ENCODE measurements at regions of chr2 and their contacts with region 1.

Region 1: DNA sequence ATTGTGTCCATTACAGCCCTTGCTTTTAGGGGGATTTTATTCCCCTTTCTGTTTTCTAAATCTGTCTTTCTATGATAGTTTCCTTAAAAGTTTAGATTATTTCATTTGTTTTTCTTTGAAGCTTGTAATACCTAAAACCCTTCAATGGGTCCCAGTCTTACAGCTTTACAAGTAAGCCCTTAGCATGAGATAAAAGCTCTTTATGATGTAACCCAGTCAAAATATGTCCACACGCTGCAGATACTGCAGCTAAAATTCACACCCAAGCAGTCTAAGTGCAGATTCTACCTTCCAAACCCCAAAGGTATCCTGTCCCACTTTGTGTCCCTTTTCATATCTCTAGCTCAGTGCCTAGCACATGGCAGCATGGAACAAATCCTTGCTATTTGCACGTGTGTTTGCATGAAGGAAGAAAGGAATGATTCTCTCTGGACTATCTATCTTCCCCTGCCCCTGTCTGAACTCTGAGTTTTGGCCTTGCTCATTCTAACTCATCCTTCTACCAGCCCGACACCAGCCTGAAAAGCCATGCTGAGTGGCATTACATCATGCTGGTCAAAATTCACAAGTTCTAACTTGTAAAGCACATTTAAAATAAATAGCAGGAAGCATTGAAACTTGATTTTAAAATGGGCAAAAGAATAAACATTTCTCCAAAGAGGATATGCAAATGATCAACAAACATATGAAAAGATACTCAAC is 623.2 kb downstream of the IRS1 start:
- DNase-seq: no peak
- ATAC-seq: no peak
- H3K4me3 ChIP-seq: no peak overlapping the region
- H3K4me3 Mint-ChIP-seq: no peak overlapping the region
- H3K27ac ChIP-seq: no peak overlapping the region
- H3K27ac Mint-ChIP-seq: no peak overlapping the region
- H3K4me1 ChIP-seq: no peaks in the 10 kb centered on the region
- H3K4me1 Mint-ChIP-seq: no peaks in the 10 kb centered on the region
- H3K27me3 ChIP-seq: no peaks in the 10 kb centered on the region
- H3K27me3 Mint-ChIP-seq: peaks cover 0 to 21% of the 10 kb centered on the region in 2 donors

Region 2: GRCh38 chr2:226030788-226031646 is 145.4 kb before region 1 on chr2:
- CTCF ChIA-PET with region 1: no interaction called
- POLR2A ChIA-PET with region 1: no interaction called
- DNase-seq: peak in 1 of 35 experiments; percentile 8
- ATAC-seq: peak in 3 of 4 experiments; percentile 37 to 51 (median 40)
- H3K4me3 ChIP-seq: peak overlapping the region in 1 of 2 donors; percentile 49
- H3K4me3 Mint-ChIP-seq: peak overlapping the region; percentile 10 to 65 (median 58)
- H3K27ac ChIP-seq: no peak overlapping the region
- H3K27ac Mint-ChIP-seq: no peak overlapping the region
- H3K4me1 ChIP-seq: peaks cover 0 to 4% of the 10 kb centered on the region in 2 experiments
- H3K4me1 Mint-ChIP-seq: peaks cover 14 to 17% (median 16%) of the 10 kb centered on the region in 3 donors
- H3K27me3 ChIP-seq: peaks cover 4 to 17% of the 10 kb centered on the region in 2 experiments
- H3K27me3 Mint-ChIP-seq: peaks cover 38 to 46% of the 10 kb centered on the region in 2 donors

Region 3: DNA sequence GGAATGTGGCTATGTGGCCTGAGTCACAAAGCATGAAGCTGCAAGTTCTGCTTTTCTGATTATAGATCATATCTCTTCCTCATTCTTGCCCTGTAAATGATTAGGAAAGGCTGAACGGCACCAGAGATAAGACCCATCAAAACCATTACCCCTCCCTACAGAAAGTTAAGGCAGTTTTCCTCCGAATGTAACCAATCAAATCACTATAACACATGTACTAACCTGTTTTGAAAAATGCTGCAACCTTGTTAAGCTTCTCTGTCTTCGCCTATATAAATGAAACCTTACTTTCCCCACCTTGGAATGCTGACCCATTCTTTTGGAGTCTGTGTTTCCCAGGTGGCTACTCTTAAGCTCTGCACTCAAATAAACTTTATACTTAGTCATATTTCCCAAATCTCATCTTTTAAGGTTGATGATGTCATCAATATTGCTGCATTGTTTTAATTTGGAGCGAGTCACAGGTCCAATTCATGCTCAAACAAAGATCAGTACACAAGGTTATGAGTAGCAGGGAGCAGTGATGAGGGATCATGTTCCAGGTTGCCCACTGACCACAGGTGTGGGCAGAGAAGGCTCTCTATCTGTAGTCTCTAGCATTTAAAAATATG is 39.1 kb before region 1 on chr2:
- CTCF ChIA-PET with region 1: interaction called in 1 of 2 experiments, 11 read pairs
- POLR2A ChIA-PET with region 1: no interaction called
- DNase-seq: no peak
- ATAC-seq: no peak
- H3K4me3 ChIP-seq: no peak overlapping the region
- H3K4me3 Mint-ChIP-seq: no peak overlapping the region
- H3K27ac ChIP-seq: no peak overlapping the region
- H3K27ac Mint-ChIP-seq: no peak overlapping the region
- H3K4me1 ChIP-seq: no peaks in the 10 kb centered on the region
- H3K4me1 Mint-ChIP-seq: peaks cover 0 to 3% (median 0%) of the 10 kb centered on the region in 3 donors
- H3K27me3 ChIP-seq: no peaks in the 10 kb centered on the region
- H3K27me3 Mint-ChIP-seq: peaks cover 7 to 13% of the 10 kb centered on the region in 2 donors

Region 4: GRCh38 chr2:226362980-226363379 is 186.5 kb after region 1 on chr2:
- CTCF ChIA-PET with region 1: no interaction called
- POLR2A ChIA-PET with region 1: no interaction called
- DNase-seq: no peak
- ATAC-seq: no peak
- H3K4me3 ChIP-seq: no peak overlapping the region
- H3K4me3 Mint-ChIP-seq: no peak overlapping the region
- H3K27ac ChIP-seq: no peak overlapping the region
- H3K27ac Mint-ChIP-seq: no peak overlapping the region
- H3K4me1 ChIP-seq: no peaks in the 10 kb centered on the region
- H3K4me1 Mint-ChIP-seq: no peaks in the 10 kb centered on the region
- H3K27me3 ChIP-seq: no peaks in the 10 kb centered on the region
- H3K27me3 Mint-ChIP-seq: peaks cover 7 to 11% of the 10 kb centered on the region in 2 donors

Measured in T-cell (primary cell).